ENCODE measurements at regions of chr18 and their contacts with region 1.

Region 1: GRCh38 chr18:49510393-49511115 is 23.5 kb upstream of the C18orf32 start:
- DNase-seq: peak; percentile 46 to 60 (median 49)
- H3K4me3 ChIP-seq: no peak overlapping the region
- H3K4me3 Mint-ChIP-seq: no peak overlapping the region
- H3K27ac ChIP-seq: no peak overlapping the region
- H3K27ac Mint-ChIP-seq: no peak overlapping the region
- H3K4me1 ChIP-seq: no peaks in the 10 kb centered on the region
- H3K4me1 Mint-ChIP-seq: no peaks in the 10 kb centered on the region
- H3K27me3 ChIP-seq: no peaks in the 10 kb centered on the region
- H3K27me3 Mint-ChIP-seq: peaks cover 11 to 16% of the 10 kb centered on the region in 2 donors

Region 2: GRCh38 chr18:49500201-49500921 is 10.2 kb before region 1 on chr18:
- CTCF ChIA-PET with region 1: interaction called, 10 read pairs
- POLR2A ChIA-PET with region 1: no interaction called
- intact Hi-C with region 1: no loop called
- DNase-seq: peak in 1 of 5 donors; percentile 33
- H3K4me3 ChIP-seq: no peak overlapping the region
- H3K4me3 Mint-ChIP-seq: no peak overlapping the region
- H3K27ac ChIP-seq: no peak overlapping the region
- H3K27ac Mint-ChIP-seq: no peak overlapping the region
- H3K4me1 ChIP-seq: no peaks in the 10 kb centered on the region
- H3K4me1 Mint-ChIP-seq: peaks cover 0 to 1% (median 0%) of the 10 kb centered on the region in 4 donors
- H3K27me3 ChIP-seq: no peaks in the 10 kb centered on the region
- H3K27me3 Mint-ChIP-seq: peaks cover 5 to 19% of the 10 kb centered on the region in 2 donors

Region 3: DNA sequence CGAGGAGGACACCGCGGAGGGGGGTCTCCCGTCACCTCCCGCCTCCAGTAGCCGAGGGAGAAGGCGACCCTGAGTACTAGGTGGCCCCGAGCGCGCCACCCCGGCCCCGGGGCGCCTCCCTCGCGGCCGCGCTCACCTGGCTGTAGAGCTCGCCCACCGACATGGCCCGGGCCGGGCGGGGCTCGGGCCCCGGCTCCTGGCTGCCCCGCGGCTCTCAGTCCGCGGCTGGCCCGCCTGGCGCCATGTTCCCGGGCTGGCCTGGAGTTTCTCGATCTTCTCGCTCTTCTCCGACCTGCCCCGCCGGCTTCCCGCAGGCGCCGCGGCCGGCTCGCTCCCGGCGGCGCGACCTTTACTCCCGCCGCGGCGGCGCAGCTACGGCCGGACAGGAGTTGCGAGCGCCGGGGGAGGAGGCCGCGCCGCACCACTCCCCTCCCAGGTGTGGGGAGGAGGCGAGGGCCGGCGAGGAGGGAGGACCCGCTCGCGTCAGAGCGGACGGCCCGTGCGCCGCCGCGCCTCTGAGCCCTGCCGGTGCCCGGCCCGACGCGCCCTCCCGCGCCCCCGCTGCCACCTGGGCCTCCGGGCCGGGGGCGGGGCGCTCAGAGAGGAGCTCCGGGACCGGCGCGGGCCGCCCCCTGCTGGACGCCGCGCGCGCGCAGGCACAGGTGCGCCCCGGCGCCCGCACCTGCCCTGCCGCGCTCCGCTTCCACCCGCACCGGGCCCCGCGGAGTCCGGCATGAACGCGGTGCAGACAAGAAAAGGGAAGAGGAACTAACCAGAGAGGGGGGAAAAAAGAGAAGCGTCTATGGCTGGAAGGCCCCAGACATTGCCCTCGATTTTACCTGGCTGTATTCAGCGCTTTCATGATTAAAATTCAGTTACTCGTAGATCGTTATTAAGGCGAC is 684.3 kb after region 1 on chr18 and contains the start of gene MYO5B:
- CTCF ChIA-PET with region 1: no interaction called
- POLR2A ChIA-PET with region 1: no interaction called
- intact Hi-C with region 1: loop called (anchors 5 kb)
- DNase-seq: peak in 4 of 5 donors; percentile 26 to 39 (median 34)
- H3K4me3 ChIP-seq: peak within 1 kb of the TSS in 1 of 2 donors; percentile 31
- H3K4me3 Mint-ChIP-seq: peak within 1 kb of the TSS; percentile 46 to 85 (median 70)
- H3K27ac ChIP-seq: no peak within 1 kb of the TSS
- H3K27ac Mint-ChIP-seq: no peak within 1 kb of the TSS
- H3K4me1 ChIP-seq: peaks cover 12% of the 10 kb centered on the region
- H3K4me1 Mint-ChIP-seq: peaks cover 5 to 21% (median 10%) of the 10 kb centered on the region in 4 donors
- H3K27me3 ChIP-seq: peaks cover 22% of the 10 kb centered on the region
- H3K27me3 Mint-ChIP-seq: peaks cover 41 to 56% of the 10 kb centered on the region in 2 donors
- total RNA-seq, gene MYO5B: not detected

Region 4: GRCh38 chr18:50266248-50266704 is 755.7 kb after region 1 on chr18 and contains the start of gene CFAP53:
- CTCF ChIA-PET with region 1: interaction called, 4 read pairs
- POLR2A ChIA-PET with region 1: no interaction called
- intact Hi-C with region 1: loop called (anchors 2 kb)
- DNase-seq: peak; percentile 73 to 83 (median 77)
- H3K4me3 ChIP-seq: peak within 1 kb of the TSS; percentile 58 to 63
- H3K4me3 Mint-ChIP-seq: peak within 1 kb of the TSS; percentile 83 to 97 (median 90)
- H3K27ac ChIP-seq: peak within 1 kb of the TSS; percentile 49
- H3K27ac Mint-ChIP-seq: peak within 1 kb of the TSS; percentile 81 to 93 (median 90)
- H3K4me1 ChIP-seq: peaks cover 15% of the 10 kb centered on the region
- H3K4me1 Mint-ChIP-seq: peaks cover 11 to 23% (median 18%) of the 10 kb centered on the region in 4 donors
- H3K27me3 ChIP-seq: no peaks in the 10 kb centered on the region
- H3K27me3 Mint-ChIP-seq: no peaks in the 10 kb centered on the region
- total RNA-seq, gene CFAP53: 1.4 to 1.6 TPM

Measured in CD4-positive, alpha-beta memory T cell (primary cell).